B cell (primary cell): ENCODE measurements at regions of chr16 and their contacts with region 1.

Region 1: GRCh38 chr16:75432828-75433731 is at the start of gene CFDP1:
- DNase-seq: peak; percentile 98
- ATAC-seq: peak; percentile 86
- H3K4me3 ChIP-seq: peak within 1 kb of the TSS; percentile 94 to 100 (median 95)
- H3K4me3 Mint-ChIP-seq: peak within 1 kb of the TSS; percentile 88
- H3K27ac ChIP-seq: peak within 1 kb of the TSS; percentile 91 to 99
- H3K27ac Mint-ChIP-seq: peak within 1 kb of the TSS; percentile 95
- H3K4me1 ChIP-seq: peaks cover 7 to 15% of the 10 kb centered on the region in 2 donors
- H3K4me1 Mint-ChIP-seq: peaks cover 20% of the 10 kb centered on the region
- H3K27me3 ChIP-seq: no peaks in the 10 kb centered on the region
- H3K27me3 Mint-ChIP-seq: no peaks in the 10 kb centered on the region
- CTCF ChIP-seq: no peak
- total RNA-seq, gene CFDP1: 39.5 and 42.8 TPM in 2 replicates

Region 2: GRCh38 chr16:74666425-74667254 is 766.4 kb before region 1 on chr16 and contains the start of gene RFWD3:
- CTCF ChIA-PET with region 1: no interaction called
- POLR2A ChIA-PET with region 1: no interaction called
- intact Hi-C with region 1: loop called (anchors 2 kb)
- DNase-seq: peak; percentile 98
- ATAC-seq: peak; percentile 100
- H3K4me3 ChIP-seq: peak within 1 kb of the TSS; percentile 80 to 99 (median 81)
- H3K4me3 Mint-ChIP-seq: peak within 1 kb of the TSS; percentile 93
- H3K27ac ChIP-seq: peak within 1 kb of the TSS; percentile 64 to 89
- H3K27ac Mint-ChIP-seq: peak within 1 kb of the TSS; percentile 92
- H3K4me1 ChIP-seq: peaks cover 10 to 14% of the 10 kb centered on the region in 2 donors
- H3K4me1 Mint-ChIP-seq: peaks cover 38% of the 10 kb centered on the region
- H3K27me3 ChIP-seq: no peaks in the 10 kb centered on the region
- H3K27me3 Mint-ChIP-seq: no peaks in the 10 kb centered on the region
- CTCF ChIP-seq: no peak
- total RNA-seq, gene RFWD3: 63.3 and 65.0 TPM in 2 replicates

Region 3: GRCh38 chr16:74774203-74775116 is 658.6 kb before region 1 on chr16 and contains the start of gene FA2H:
- CTCF ChIA-PET with region 1: no interaction called
- POLR2A ChIA-PET with region 1: no interaction called
- intact Hi-C with region 1: no loop called
- DNase-seq: peak; percentile 80
- ATAC-seq: peak; percentile 88
- H3K4me3 ChIP-seq: peak within 1 kb of the TSS in 4 of 5 experiments; percentile 19 to 54 (median 44)
- H3K4me3 Mint-ChIP-seq: peak within 1 kb of the TSS; percentile 84
- H3K27ac ChIP-seq: no peak within 1 kb of the TSS
- H3K27ac Mint-ChIP-seq: no peak within 1 kb of the TSS
- H3K4me1 ChIP-seq: peaks cover 31 to 34% of the 10 kb centered on the region in 2 donors
- H3K4me1 Mint-ChIP-seq: peaks cover 37% of the 10 kb centered on the region
- H3K27me3 ChIP-seq: peaks cover 0 to 6% (median 3%) of the 10 kb centered on the region in 4 experiments
- H3K27me3 Mint-ChIP-seq: peaks cover 15% of the 10 kb centered on the region
- CTCF ChIP-seq: peak; percentile 23
- total RNA-seq, gene FA2H: 1.0 TPM in 2 replicates

Region 4: GRCh38 chr16:75148311-75149195 is 284.5 kb before region 1 on chr16 and contains the start of gene ZFP1:
- CTCF ChIA-PET with region 1: no interaction called
- POLR2A ChIA-PET with region 1: no interaction called
- intact Hi-C with region 1: loop called (anchors 1 kb)
- DNase-seq: peak; percentile 95
- ATAC-seq: peak; percentile 86
- H3K4me3 ChIP-seq: peak within 1 kb of the TSS; percentile 54 to 97 (median 95)
- H3K4me3 Mint-ChIP-seq: peak within 1 kb of the TSS; percentile 89
- H3K27ac ChIP-seq: peak within 1 kb of the TSS; percentile 86 to 90
- H3K27ac Mint-ChIP-seq: peak within 1 kb of the TSS; percentile 90
- H3K4me1 ChIP-seq: peaks cover 5 to 7% of the 10 kb centered on the region in 2 donors
- H3K4me1 Mint-ChIP-seq: peaks cover 20% of the 10 kb centered on the region
- H3K27me3 ChIP-seq: peaks cover 0 to 2% (median 0%) of the 10 kb centered on the region in 4 experiments
- H3K27me3 Mint-ChIP-seq: no peaks in the 10 kb centered on the region
- CTCF ChIP-seq: no peak
- total RNA-seq, gene ZFP1: 13.4 and 14.1 TPM in 2 replicates

Region 5: DNA sequence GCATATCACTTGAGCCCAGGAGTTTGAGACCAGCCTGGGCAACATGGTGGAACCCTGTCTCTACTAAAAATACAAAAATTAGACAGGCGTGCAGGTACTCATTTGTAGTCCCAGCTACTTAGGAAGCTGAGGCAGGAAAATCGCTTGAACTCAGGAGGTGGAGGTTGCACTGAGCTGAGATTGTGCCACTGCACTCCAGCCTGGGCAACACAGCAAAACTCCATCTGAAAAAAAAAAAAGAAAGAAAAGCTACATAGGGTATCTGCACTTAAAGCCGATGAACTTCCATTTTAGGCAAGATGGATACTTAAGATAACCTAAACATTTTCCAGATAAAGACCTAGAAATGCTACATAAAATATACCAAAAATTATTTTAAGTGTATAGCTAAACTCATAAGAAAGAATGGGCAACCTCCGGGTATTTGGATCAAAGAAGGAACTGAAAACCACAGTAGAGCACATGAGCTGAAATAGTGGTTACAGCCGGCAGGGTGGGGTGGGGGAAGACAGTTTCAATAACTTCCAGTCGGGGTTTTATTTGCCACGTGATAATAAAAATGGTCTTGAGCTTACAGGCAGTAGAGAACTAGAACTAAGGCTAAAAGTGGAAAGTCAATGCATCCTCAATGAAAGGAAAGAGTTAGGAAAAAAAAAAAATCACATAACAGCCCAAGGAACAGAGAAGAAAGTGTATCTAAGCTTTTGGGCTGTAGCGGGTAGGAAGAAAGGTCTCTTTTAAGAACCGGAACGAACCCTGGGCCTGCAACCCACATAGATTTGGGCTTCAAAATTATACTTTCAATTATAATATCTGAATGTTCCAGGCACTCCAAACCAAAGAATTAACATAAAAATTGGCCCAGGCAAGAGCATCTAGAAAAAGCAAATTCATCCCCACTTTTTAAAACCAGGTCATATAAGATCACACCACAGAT is 52.9 kb before region 1 on chr16:
- CTCF ChIA-PET with region 1: no interaction called
- POLR2A ChIA-PET with region 1: no interaction called
- intact Hi-C with region 1: loop called (anchors 1 kb)
- DNase-seq: peak; percentile 87
- ATAC-seq: peak; percentile 98
- H3K4me3 ChIP-seq: no peak overlapping the region
- H3K4me3 Mint-ChIP-seq: peak overlapping the region; percentile 44
- H3K27ac ChIP-seq: no peak overlapping the region
- H3K27ac Mint-ChIP-seq: peak overlapping the region; percentile 57
- H3K4me1 ChIP-seq: peaks cover 23 to 41% of the 10 kb centered on the region in 2 donors
- H3K4me1 Mint-ChIP-seq: peaks cover 27% of the 10 kb centered on the region
- H3K27me3 ChIP-seq: peaks cover 10 to 79% (median 71%) of the 10 kb centered on the region in 4 experiments
- H3K27me3 Mint-ChIP-seq: peaks cover 77% of the 10 kb centered on the region
- CTCF ChIP-seq: no peak

Region 6: GRCh38 chr16:75519881-75520280 is 86.8 kb after region 1 on chr16:
- CTCF ChIA-PET with region 1: interaction called, 8 read pairs
- POLR2A ChIA-PET with region 1: interaction called, 7 read pairs
- intact Hi-C with region 1: loop called (anchors 1 kb)
- DNase-seq: no peak
- ATAC-seq: no peak
- H3K4me3 ChIP-seq: no peak overlapping the region
- H3K4me3 Mint-ChIP-seq: no peak overlapping the region
- H3K27ac ChIP-seq: no peak overlapping the region
- H3K27ac Mint-ChIP-seq: no peak overlapping the region
- H3K4me1 ChIP-seq: peaks cover 0 to 13% of the 10 kb centered on the region in 2 donors
- H3K4me1 Mint-ChIP-seq: peaks cover 12% of the 10 kb centered on the region
- H3K27me3 ChIP-seq: no peaks in the 10 kb centered on the region
- H3K27me3 Mint-ChIP-seq: no peaks in the 10 kb centered on the region
- CTCF ChIP-seq: no peak

Region 7: DNA sequence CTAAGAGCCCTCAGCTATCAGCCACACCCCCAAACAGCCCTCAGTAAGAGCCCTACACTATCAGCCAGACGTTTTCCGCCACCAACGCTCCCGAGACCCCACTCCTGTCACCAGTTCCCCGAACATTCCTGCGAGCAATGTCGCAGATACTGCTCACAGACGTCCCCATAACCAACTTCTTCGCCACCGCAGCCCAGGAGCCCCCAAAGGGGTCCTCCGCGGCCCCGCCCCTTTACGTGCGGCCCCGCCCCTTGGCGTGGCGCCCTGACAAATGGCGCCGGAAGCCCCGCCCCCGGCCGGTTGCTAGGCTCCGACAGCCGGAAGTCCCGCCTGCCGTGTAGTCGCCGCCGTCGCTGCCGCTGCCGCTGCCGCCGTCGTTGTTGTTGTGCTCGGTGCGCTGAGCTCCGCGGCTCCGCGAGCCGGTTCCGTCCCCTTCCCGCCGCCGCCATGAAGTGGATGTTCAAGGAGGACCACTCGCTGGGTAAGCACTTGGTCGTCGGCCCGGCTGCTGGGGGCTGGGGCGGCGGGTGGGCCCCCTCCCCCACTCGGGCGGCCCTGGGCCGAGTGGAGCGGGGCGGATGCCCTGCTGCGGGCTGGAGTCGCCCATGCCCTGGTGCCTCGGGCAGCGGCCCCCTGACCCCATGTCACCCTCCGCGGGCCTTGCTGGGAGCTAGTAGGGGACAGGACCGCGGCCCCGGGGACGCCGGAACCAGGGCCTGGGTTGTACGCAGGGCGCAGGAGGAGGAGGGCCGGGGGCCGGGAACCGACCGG is 133.1 kb after region 1 on chr16 and contains the start of gene GABARAPL2:
- CTCF ChIA-PET with region 1: no interaction called
- POLR2A ChIA-PET with region 1: interaction called, 3 read pairs
- intact Hi-C with region 1: loop called (anchors 1 kb)
- DNase-seq: peak; percentile 97
- ATAC-seq: peak; percentile 70
- H3K4me3 ChIP-seq: peak within 1 kb of the TSS; percentile 75 to 96 (median 95)
- H3K4me3 Mint-ChIP-seq: peak within 1 kb of the TSS; percentile 100
- H3K27ac ChIP-seq: peak within 1 kb of the TSS; percentile 96 to 99
- H3K27ac Mint-ChIP-seq: peak within 1 kb of the TSS; percentile 97
- H3K4me1 ChIP-seq: peaks cover 44 to 61% of the 10 kb centered on the region in 2 donors
- H3K4me1 Mint-ChIP-seq: peaks cover 53% of the 10 kb centered on the region
- H3K27me3 ChIP-seq: no peaks in the 10 kb centered on the region
- H3K27me3 Mint-ChIP-seq: no peaks in the 10 kb centered on the region
- CTCF ChIP-seq: no peak
- total RNA-seq, gene GABARAPL2: 84.8 and 84.9 TPM in 2 replicates